CD8-positive, alpha-beta T cell (primary cell): ENCODE measurements at regions of chr6 and their contacts with region 1.

Region 1: DNA sequence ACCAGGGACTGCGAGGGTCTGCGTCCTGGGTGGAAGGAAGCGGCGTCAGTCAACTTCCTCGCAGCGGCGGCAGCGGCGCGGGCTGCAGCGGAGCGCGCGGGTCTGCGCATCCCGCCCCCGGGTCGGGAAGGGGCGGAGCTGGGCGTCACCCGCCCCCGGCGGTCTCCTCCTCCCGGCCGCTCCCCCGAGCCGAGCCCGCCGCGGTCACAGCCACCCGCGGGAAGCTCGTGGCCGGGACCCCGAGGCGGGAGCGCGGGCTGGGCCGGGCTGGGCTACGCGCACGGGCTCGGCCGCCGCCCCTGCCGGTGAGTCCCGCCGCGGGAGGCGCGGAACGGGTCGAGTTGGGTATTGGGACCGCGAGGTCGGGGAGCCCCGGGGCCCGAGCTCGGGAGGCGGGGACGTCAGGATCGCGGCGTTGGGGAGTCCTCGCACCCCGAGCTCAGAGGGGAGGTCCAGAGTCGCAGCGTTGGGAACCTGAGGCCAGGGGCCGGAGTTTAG is at the start of gene PAQR8:
- DNase-seq: peak; percentile 62 to 93 (median 80)
- ATAC-seq: peak; percentile 88
- H3K4me3 ChIP-seq: peak within 1 kb of the TSS; percentile 94 to 99
- H3K4me3 Mint-ChIP-seq: peak within 1 kb of the TSS; percentile 99
- H3K27ac ChIP-seq: peak within 1 kb of the TSS; percentile 72 to 86
- H3K27ac Mint-ChIP-seq: peak within 1 kb of the TSS; percentile 96
- H3K4me1 ChIP-seq: peaks cover 35% of the 10 kb centered on the region
- H3K4me1 Mint-ChIP-seq: peaks cover 44% of the 10 kb centered on the region
- H3K27me3 ChIP-seq: no peaks in the 10 kb centered on the region
- H3K27me3 Mint-ChIP-seq: no peaks in the 10 kb centered on the region
- CTCF ChIP-seq: no peak
- total RNA-seq, gene PAQR8: 1.8 to 2.2 TPM

Region 2: DNA sequence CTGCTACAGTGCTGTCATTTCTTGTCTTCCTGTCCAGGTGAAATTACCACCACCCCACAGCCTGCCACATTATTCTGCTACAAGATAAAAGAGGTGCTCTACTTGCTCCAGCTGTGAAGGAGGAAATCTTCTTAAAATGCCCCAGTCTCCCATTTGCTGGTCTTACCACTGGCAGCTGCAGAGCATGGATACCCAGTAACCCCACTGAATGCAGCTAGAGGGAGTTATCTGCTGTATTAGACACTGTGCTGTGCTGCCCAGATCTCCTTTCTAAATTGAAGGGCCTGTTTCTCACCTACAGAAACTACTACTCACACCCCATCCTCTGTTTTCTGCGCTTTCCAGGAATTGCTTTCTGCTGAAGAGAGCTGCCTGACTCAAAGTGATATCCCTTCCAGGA is 792.4 kb before region 1 on chr6:
- CTCF ChIA-PET with region 1: no interaction called
- POLR2A ChIA-PET with region 1: no interaction called
- intact Hi-C with region 1: no loop called
- DNase-seq: no peak
- ATAC-seq: no peak
- H3K4me3 ChIP-seq: no peak overlapping the region
- H3K4me3 Mint-ChIP-seq: no peak overlapping the region
- H3K27ac ChIP-seq: no peak overlapping the region
- H3K27ac Mint-ChIP-seq: no peak overlapping the region
- H3K4me1 ChIP-seq: no peaks in the 10 kb centered on the region
- H3K4me1 Mint-ChIP-seq: no peaks in the 10 kb centered on the region
- H3K27me3 ChIP-seq: no peaks in the 10 kb centered on the region
- H3K27me3 Mint-ChIP-seq: no peaks in the 10 kb centered on the region
- CTCF ChIP-seq: no peak

Region 3: GRCh38 chr6:52046456-52046855 is 315.5 kb before region 1 on chr6:
- CTCF ChIA-PET with region 1: no interaction called
- POLR2A ChIA-PET with region 1: no interaction called
- intact Hi-C with region 1: no loop called
- DNase-seq: no peak
- ATAC-seq: no peak
- H3K4me3 ChIP-seq: no peak overlapping the region
- H3K4me3 Mint-ChIP-seq: no peak overlapping the region
- H3K27ac ChIP-seq: no peak overlapping the region
- H3K27ac Mint-ChIP-seq: no peak overlapping the region
- H3K4me1 ChIP-seq: no peaks in the 10 kb centered on the region
- H3K4me1 Mint-ChIP-seq: no peaks in the 10 kb centered on the region
- H3K27me3 ChIP-seq: peaks cover 2 to 3% of the 10 kb centered on the region in 2 experiments
- H3K27me3 Mint-ChIP-seq: peaks cover 28% of the 10 kb centered on the region
- CTCF ChIP-seq: no peak

Region 4: DNA sequence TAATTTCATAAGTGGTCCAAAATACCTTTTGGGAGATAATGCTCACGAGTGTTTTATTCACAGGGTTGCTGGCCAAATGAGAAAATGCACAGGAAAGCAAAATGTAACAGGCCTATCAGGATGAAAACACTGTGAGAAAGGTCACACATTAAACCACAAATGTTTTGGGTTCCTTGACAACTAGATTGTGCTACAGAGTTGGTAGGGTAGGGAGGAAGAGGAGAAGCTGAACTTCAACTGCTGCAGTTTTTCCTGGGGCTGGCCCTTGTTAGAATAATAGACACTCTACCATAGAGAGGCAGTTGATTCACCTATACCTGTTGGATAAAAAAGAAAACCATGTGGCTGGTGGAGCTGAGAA is 28.2 kb before region 1 on chr6:
- CTCF ChIA-PET with region 1: interaction called, 6 read pairs
- POLR2A ChIA-PET with region 1: interaction called, 17 read pairs
- intact Hi-C with region 1: loop called in 1 of 2 experiments (anchors 2 kb)
- DNase-seq: peak in 5 of 9 experiments; percentile 1 to 78 (median 23)
- ATAC-seq: peak; percentile 76
- H3K4me3 ChIP-seq: no peak overlapping the region
- H3K4me3 Mint-ChIP-seq: peak overlapping the region; percentile 69
- H3K27ac ChIP-seq: peak overlapping the region; percentile 56 to 85
- H3K27ac Mint-ChIP-seq: peak overlapping the region; percentile 94
- H3K4me1 ChIP-seq: peaks cover 66% of the 10 kb centered on the region
- H3K4me1 Mint-ChIP-seq: peaks cover 68% of the 10 kb centered on the region
- H3K27me3 ChIP-seq: no peaks in the 10 kb centered on the region
- H3K27me3 Mint-ChIP-seq: no peaks in the 10 kb centered on the region
- CTCF ChIP-seq: no peak

Region 5: DNA sequence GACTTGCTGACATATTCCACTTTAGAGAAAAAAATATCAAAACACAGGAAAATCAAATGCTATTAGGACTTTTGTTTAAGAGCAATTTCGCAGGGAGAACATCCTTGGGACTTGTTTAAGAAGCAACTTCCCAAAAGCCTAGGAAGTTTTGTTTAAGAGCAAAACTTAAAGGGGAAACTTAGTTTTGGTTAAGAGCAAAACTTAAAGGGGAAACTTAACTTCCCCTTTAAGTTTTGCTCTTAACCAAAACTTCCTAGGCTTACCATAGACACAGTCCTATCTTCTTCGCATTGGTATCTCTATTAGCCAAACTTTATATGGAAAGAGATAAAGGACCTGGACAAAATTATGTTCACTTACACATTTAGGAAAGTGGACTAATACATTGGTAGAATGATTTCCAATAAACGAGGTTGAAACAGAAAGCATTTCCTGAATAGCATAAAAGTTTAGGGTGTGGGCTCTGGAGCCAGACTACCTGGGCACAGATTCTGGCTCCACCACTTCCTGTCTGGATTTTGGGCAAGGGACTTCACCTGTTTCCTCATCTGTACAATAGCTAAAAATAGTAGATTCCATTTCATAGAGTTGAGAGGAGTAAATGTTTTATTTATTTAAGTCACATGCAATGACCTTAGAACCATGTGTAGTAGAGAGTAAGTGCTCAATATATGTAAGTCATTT is 15.7 kb after region 1 on chr6:
- CTCF ChIA-PET with region 1: interaction called, 10 read pairs
- POLR2A ChIA-PET with region 1: interaction called, 7 read pairs
- intact Hi-C with region 1: loop called in 1 of 2 experiments (anchors 1 kb)
- DNase-seq: peak in 1 of 9 experiments; percentile 37
- ATAC-seq: no peak
- H3K4me3 ChIP-seq: no peak overlapping the region
- H3K4me3 Mint-ChIP-seq: peak overlapping the region; percentile 44
- H3K27ac ChIP-seq: no peak overlapping the region
- H3K27ac Mint-ChIP-seq: peak overlapping the region; percentile 86
- H3K4me1 ChIP-seq: peaks cover 62% of the 10 kb centered on the region
- H3K4me1 Mint-ChIP-seq: peaks cover 73% of the 10 kb centered on the region
- H3K27me3 ChIP-seq: no peaks in the 10 kb centered on the region
- H3K27me3 Mint-ChIP-seq: no peaks in the 10 kb centered on the region
- CTCF ChIP-seq: no peak

Region 6: GRCh38 chr6:52399511-52400312 is 37.7 kb after region 1 on chr6:
- CTCF ChIA-PET with region 1: interaction called, 52 read pairs
- POLR2A ChIA-PET with region 1: interaction called, 20 read pairs
- intact Hi-C with region 1: loop called (anchors 1 to 2 kb)
- DNase-seq: peak in 6 of 9 experiments; percentile 25 to 76 (median 52)
- ATAC-seq: peak; percentile 52
- H3K4me3 ChIP-seq: no peak overlapping the region
- H3K4me3 Mint-ChIP-seq: peak overlapping the region; percentile 53
- H3K27ac ChIP-seq: peak overlapping the region; percentile 45 to 75
- H3K27ac Mint-ChIP-seq: peak overlapping the region; percentile 93
- H3K4me1 ChIP-seq: peaks cover 71% of the 10 kb centered on the region
- H3K4me1 Mint-ChIP-seq: peaks cover 82% of the 10 kb centered on the region
- H3K27me3 ChIP-seq: no peaks in the 10 kb centered on the region
- H3K27me3 Mint-ChIP-seq: no peaks in the 10 kb centered on the region
- CTCF ChIP-seq: peak; percentile 96

Region 7: GRCh38 chr6:52577022-52577777 is 215.2 kb after region 1 on chr6 and contains the start of gene TRAM2:
- CTCF ChIA-PET with region 1: no interaction called
- POLR2A ChIA-PET with region 1: no interaction called
- intact Hi-C with region 1: loop called in 1 of 2 experiments (anchors 2 kb)
- DNase-seq: peak; percentile 62 to 89 (median 77)
- ATAC-seq: peak; percentile 78
- H3K4me3 ChIP-seq: peak within 1 kb of the TSS; percentile 81 to 82
- H3K4me3 Mint-ChIP-seq: peak within 1 kb of the TSS; percentile 87
- H3K27ac ChIP-seq: peak within 1 kb of the TSS; percentile 58
- H3K27ac Mint-ChIP-seq: peak within 1 kb of the TSS; percentile 87
- H3K4me1 ChIP-seq: peaks cover 44% of the 10 kb centered on the region
- H3K4me1 Mint-ChIP-seq: peaks cover 49% of the 10 kb centered on the region
- H3K27me3 ChIP-seq: no peaks in the 10 kb centered on the region
- H3K27me3 Mint-ChIP-seq: no peaks in the 10 kb centered on the region
- CTCF ChIP-seq: no peak
- total RNA-seq, gene TRAM2: 4.6 to 4.9 TPM